ENCODE measurements at regions of chr1 and their contacts with region 1.

Region 1: GRCh38 chr1:43974443-43975248 is at the start of gene ATP6V0B:
- DNase-seq: peak; percentile 94
- total RNA-seq, gene ATP6V0B: 133 and 183 TPM in 2 replicates

Region 2: DNA sequence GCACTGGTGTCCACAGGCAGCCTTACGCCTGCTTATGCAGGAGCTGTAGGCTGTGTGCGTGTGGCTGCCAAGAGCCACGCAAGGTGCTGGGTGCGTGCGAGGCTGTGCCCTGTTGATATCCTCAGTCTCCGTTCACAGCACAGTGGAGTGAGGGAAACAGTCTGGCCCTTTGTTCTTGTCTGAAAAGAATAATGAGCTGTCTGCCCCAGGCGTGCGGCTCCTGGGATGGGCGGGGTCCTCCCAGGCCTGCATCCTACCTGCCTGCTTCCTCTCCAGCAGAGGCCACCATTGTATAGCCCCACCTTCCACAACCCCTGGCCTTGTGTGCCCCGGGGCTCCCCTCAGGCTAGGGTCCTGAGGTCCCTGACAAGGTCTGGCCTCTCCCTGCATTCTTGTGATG is 371.7 kb before region 1 on chr1:
- in situ Hi-C with region 1: no loop called
- DNase-seq: no peak

Region 3: DNA sequence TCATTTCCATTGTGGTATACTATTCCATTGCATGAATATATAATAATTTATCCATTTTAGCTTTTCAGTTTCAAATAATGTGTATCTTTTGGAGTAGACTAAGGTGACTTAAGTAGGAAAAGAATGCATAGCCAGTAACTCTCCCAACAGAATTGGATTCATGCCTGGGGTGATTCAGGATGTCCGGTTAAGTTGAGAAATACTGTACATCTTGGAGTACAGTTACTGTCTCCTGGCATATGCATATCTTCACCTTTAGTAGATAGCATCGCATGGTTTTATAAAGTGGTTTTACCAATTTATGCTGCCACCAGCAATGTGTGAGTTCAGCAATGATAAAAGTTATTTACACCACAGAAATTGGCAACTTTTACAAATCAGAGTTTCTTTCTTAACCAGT is 75.2 kb after region 1 on chr1:
- in situ Hi-C with region 1: loop called (anchors 10 kb)
- DNase-seq: no peak